Panc1 (cell line): ENCODE measurements at regions of chr16 and their contacts with region 1.

Region 1: DNA sequence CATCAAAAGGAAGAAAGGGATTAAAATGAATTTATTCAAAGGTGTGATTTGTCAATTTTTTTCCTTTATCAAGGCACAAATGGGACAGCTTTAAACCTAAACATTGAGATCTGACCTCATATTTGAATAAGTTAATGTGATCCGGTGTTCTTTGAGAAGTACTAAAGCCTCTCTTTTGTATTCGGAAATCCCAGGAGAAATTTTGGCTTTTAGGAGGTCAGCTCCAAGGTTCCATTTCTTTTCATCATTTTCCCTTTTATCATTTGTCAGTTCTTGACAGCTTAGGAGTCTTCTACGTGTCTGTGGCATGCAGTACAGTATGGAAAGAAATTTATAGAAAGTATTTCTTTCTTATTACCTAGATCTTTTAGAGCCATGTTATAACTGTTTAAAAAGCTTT is 873.4 kb upstream of the CDH8 start:
- DNase-seq: no peak
- ATAC-seq: no peak
- H3K4me3 ChIP-seq: no peak overlapping the region
- H3K27ac ChIP-seq: no peak overlapping the region
- H3K4me1 ChIP-seq: no peaks in the 10 kb centered on the region
- H3K27me3 ChIP-seq: no peaks in the 10 kb centered on the region
- CTCF ChIP-seq: no peak

Region 2: GRCh38 chr16:62692685-62693084 is 216.9 kb before region 1 on chr16:
- CTCF ChIA-PET with region 1: no interaction called
- POLR2A ChIA-PET with region 1: no interaction called
- in situ Hi-C with region 1: no loop called
- intact Hi-C with region 1: no loop called
- DNase-seq: no peak
- ATAC-seq: no peak
- H3K4me3 ChIP-seq: no peak overlapping the region
- H3K27ac ChIP-seq: no peak overlapping the region
- H3K4me1 ChIP-seq: no peaks in the 10 kb centered on the region
- H3K27me3 ChIP-seq: no peaks in the 10 kb centered on the region
- CTCF ChIP-seq: no peak

Region 3: GRCh38 chr16:62933929-62934328 is 24.3 kb after region 1 on chr16:
- CTCF ChIA-PET with region 1: no interaction called
- POLR2A ChIA-PET with region 1: no interaction called
- in situ Hi-C with region 1: no loop called
- intact Hi-C with region 1: loop called (anchors 2 kb)
- DNase-seq: no peak
- ATAC-seq: no peak
- H3K4me3 ChIP-seq: no peak overlapping the region
- H3K27ac ChIP-seq: no peak overlapping the region
- H3K4me1 ChIP-seq: no peaks in the 10 kb centered on the region
- H3K27me3 ChIP-seq: no peaks in the 10 kb centered on the region
- CTCF ChIP-seq: no peak